ENCODE measurements at regions of chr4 and their contacts with region 1.

Region 1: DNA sequence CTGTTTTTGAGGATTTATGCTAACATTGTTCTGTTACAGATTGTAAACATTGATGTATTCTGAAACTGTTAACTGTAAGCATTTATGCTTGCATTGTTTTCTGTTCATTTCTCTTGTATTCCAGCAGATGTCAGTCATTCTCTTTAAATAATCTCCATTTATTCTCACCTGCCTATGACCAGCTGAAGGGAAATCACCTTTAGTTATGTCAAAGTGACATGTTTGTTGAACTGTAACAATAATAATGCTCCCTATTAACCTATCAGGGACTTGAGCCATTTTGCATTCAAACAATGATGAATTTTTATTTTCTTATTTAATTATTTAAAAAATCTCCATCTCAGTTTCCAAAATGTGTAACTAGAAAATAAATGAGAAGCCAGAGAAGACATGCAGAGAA is 58.0 kb downstream of the SPCS3 start:
- DNase-seq: peak; percentile 43
- ATAC-seq: peak; percentile 53; the same call in 1 of the 2 replicates
- H3K4me3 ChIP-seq: no peak overlapping the region
- H3K27ac ChIP-seq: no peak overlapping the region
- H3K4me1 ChIP-seq: no peaks in the 10 kb centered on the region
- H3K27me3 ChIP-seq: no peaks in the 10 kb centered on the region
- CTCF ChIP-seq: peak; percentile 65
- POLR2A ChIP-seq: no peak
- RAD21 ChIP-seq: peak; percentile 82

Region 2: DNA sequence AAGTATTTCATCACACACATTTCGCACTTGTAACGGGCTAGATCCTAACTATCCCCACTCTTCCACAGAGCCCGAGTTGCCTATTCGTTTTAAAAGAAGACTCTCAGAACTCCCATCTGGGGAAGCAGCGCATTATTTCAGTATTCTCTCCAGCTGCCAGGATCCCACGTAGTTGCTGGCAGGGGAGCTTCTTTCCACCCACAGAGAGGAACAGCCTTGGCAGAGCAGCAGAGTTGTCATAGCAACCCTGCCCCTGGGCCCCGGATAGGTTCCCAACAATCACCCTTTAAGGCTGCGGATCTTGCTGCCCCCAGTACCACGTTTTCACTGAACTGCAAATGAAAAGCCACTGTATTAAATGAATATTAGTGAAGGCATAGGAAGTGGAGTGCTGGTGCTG is 672.4 kb before region 1 on chr4:
- CTCF ChIA-PET with region 1: no interaction called
- POLR2A ChIA-PET with region 1: no interaction called
- dilution Hi-C with region 1: no loop called
- in situ Hi-C with region 1: no loop called
- intact Hi-C with region 1: no loop called
- DNase-seq: no peak
- ATAC-seq: no peak
- H3K4me3 ChIP-seq: no peak overlapping the region
- H3K27ac ChIP-seq: no peak overlapping the region
- H3K4me1 ChIP-seq: no peaks in the 10 kb centered on the region
- H3K27me3 ChIP-seq: no peaks in the 10 kb centered on the region
- CTCF ChIP-seq: no peak
- POLR2A ChIP-seq: no peak
- RAD21 ChIP-seq: no peak

Region 3: DNA sequence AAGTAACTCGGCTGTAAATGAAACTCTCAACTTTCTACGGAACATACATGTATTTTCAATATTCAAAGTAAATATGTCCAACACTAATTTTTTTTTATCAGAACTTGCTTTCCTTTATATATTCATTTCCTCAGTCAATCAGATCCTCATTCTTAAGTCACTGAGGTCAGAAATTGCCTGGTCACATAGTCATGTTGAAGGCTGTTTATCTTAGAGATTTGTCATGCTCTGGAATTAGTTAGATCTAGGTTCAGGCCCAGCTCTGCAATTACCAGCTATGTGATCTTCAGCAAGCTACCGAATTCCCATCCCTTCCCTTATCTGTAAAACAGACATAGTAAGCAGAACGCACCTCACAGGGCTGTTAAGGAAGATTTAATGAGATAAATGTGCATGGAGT is 170.8 kb after region 1 on chr4:
- CTCF ChIA-PET with region 1: no interaction called
- POLR2A ChIA-PET with region 1: no interaction called
- dilution Hi-C with region 1: no loop called
- in situ Hi-C with region 1: no loop called
- intact Hi-C with region 1: loop called (anchors 5 kb)
- DNase-seq: peak; percentile 90
- ATAC-seq: peak; percentile 75
- H3K4me3 ChIP-seq: no peak overlapping the region
- H3K27ac ChIP-seq: no peak overlapping the region
- H3K4me1 ChIP-seq: peaks cover 14% of the 10 kb centered on the region
- H3K27me3 ChIP-seq: no peaks in the 10 kb centered on the region
- CTCF ChIP-seq: no peak
- POLR2A ChIP-seq: no peak
- RAD21 ChIP-seq: no peak

Region 4: DNA sequence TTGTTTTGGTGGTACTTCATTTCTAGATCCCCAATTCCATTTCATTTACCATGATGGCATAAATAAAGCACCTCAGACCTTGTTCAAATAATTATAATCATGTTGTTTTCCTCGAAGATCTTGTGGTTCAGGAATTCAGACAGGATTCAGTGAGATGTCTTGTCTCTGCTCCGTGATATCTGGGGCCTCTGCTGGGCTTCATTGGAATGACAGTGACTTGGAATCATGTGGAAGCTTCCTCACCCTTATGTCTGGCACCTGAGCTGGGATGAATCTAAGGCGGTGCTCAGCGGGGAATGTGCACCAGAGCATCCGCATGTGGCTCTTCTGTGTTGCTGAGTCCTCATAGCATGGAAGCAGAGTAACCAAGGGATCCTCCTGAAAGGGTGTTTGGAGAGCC is 282.8 kb after region 1 on chr4:
- CTCF ChIA-PET with region 1: no interaction called
- POLR2A ChIA-PET with region 1: no interaction called
- dilution Hi-C with region 1: no loop called
- in situ Hi-C with region 1: loop called (anchors 25 kb)
- intact Hi-C with region 1: no loop called
- DNase-seq: no peak
- ATAC-seq: no peak
- H3K4me3 ChIP-seq: no peak overlapping the region
- H3K27ac ChIP-seq: no peak overlapping the region
- H3K4me1 ChIP-seq: no peaks in the 10 kb centered on the region
- H3K27me3 ChIP-seq: no peaks in the 10 kb centered on the region
- CTCF ChIP-seq: peak; percentile 24; the same call in 1 of the 2 replicates
- POLR2A ChIP-seq: no peak
- RAD21 ChIP-seq: no peak

Region 5: DNA sequence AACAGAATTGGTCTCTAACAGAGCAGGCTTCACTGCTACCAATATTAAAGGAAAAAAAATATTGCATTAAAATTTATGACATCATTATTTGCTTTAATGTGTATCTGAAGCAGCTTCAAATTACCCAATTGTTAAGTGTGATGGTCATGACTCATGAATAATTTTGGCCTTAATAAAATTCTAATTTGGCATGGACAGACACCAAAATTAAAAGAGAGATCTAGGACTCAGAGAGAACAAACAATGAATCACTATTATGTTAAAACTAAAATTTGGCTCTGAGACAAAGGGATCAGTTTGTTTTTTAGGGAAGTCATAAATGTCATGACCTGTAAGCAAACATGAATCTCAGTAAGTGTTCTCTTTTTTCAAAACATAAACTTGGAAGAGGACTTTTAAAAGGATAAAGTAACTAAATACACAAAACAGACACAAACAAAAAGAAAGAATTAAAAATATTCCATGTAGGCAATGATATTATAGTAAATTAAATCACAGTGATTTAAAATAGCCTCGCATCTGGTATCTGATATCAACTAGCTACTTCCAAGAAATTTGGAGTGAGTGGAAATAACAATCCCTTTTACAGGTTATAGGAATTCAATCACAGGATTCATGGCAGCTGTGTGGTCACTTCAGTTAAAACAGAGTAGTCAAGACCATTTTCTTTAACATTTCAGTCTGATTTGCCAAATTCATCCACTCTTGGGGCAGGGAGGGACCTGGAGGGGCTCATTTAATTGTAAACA is 403.4 kb after region 1 on chr4:
- CTCF ChIA-PET with region 1: no interaction called
- POLR2A ChIA-PET with region 1: no interaction called
- dilution Hi-C with region 1: no loop called
- in situ Hi-C with region 1: loop called (anchors 25 kb)
- intact Hi-C with region 1: loop called (anchors 2 kb)
- DNase-seq: no peak
- ATAC-seq: peak; percentile 3; the same call in 1 of the 2 replicates
- H3K4me3 ChIP-seq: no peak overlapping the region
- H3K27ac ChIP-seq: peak overlapping the region; percentile 32; the same call in 1 of the 2 replicates
- H3K4me1 ChIP-seq: peaks cover 14% of the 10 kb centered on the region
- H3K27me3 ChIP-seq: no peaks in the 10 kb centered on the region
- CTCF ChIP-seq: no peak
- POLR2A ChIP-seq: no peak
- RAD21 ChIP-seq: no peak

Region 6: GRCh38 chr4:177047070-177047850 is 669.5 kb after region 1 on chr4:
- CTCF ChIA-PET with region 1: interaction called, 17 read pairs
- POLR2A ChIA-PET with region 1: no interaction called
- dilution Hi-C with region 1: no loop called
- in situ Hi-C with region 1: loop called (anchors 5 kb)
- intact Hi-C with region 1: loop called (anchors 1 kb)
- DNase-seq: peak; percentile 81
- ATAC-seq: peak; percentile 99
- H3K4me3 ChIP-seq: no peak overlapping the region
- H3K27ac ChIP-seq: no peak overlapping the region
- H3K4me1 ChIP-seq: no peaks in the 10 kb centered on the region
- H3K27me3 ChIP-seq: no peaks in the 10 kb centered on the region
- CTCF ChIP-seq: peak; percentile 82
- POLR2A ChIP-seq: 0 out of 2 replicates have a peak, but pooled peaks have one; percentile 25
- RAD21 ChIP-seq: peak; percentile 96

Region 7: DNA sequence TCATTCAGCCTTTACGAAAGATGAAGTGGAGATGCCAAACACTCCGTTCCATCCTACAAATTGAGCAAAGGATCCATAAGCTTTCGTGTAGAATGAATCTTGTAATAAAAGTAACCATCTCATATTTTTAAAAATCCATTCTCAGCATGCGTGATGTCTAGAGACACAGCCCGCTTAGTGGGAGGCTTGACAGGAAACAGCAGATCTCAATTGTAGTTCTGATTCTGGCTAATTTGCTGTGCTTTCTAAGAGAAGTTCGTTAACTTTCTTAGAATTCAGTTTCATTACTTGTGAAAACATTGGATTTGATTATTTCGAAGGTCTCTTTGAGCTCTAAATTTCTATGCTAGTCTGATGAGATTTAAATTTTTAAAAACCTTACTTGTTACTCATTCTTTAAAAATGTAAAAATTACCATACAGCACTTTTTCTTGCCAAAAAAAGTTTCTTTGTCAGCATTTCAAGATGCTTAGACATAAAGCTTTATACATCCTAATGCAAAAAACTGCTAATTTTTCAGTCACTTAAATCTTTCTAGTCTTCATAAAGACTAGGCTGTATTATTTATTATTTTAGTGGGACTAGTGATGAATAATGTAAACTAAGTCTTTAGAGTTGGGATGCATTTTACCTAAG is 865.0 kb after region 1 on chr4:
- CTCF ChIA-PET with region 1: no interaction called
- POLR2A ChIA-PET with region 1: no interaction called
- dilution Hi-C with region 1: no loop called
- in situ Hi-C with region 1: loop called (anchors 10 kb)
- intact Hi-C with region 1: loop called (anchors 2 kb)
- DNase-seq: peak; percentile 48
- ATAC-seq: no peak
- H3K4me3 ChIP-seq: no peak overlapping the region
- H3K27ac ChIP-seq: no peak overlapping the region
- H3K4me1 ChIP-seq: peaks cover 2% of the 10 kb centered on the region; the same call in 1 of the 2 replicates
- H3K27me3 ChIP-seq: no peaks in the 10 kb centered on the region
- CTCF ChIP-seq: no peak
- POLR2A ChIP-seq: no peak
- RAD21 ChIP-seq: no peak

Region 8: GRCh38 chr4:177339477-177340374 is 961.9 kb after region 1 on chr4:
- CTCF ChIA-PET with region 1: no interaction called
- POLR2A ChIA-PET with region 1: no interaction called
- dilution Hi-C with region 1: no loop called
- in situ Hi-C with region 1: loop called (anchors 10 kb)
- intact Hi-C with region 1: loop called (anchors 2 kb)
- DNase-seq: peak; percentile 51
- ATAC-seq: peak; percentile 84
- H3K4me3 ChIP-seq: no peak overlapping the region
- H3K27ac ChIP-seq: no peak overlapping the region; the same call in 1 of the 2 replicates
- H3K4me1 ChIP-seq: peaks cover 2% of the 10 kb centered on the region; the same call in 1 of the 2 replicates
- H3K27me3 ChIP-seq: no peaks in the 10 kb centered on the region
- CTCF ChIP-seq: peak; percentile 79
- POLR2A ChIP-seq: no peak
- RAD21 ChIP-seq: peak; percentile 80

Measured in IMR-90 (cell line).